Mammary epithelial cell (primary cell): ENCODE measurements at regions of chr18 and their contacts with region 1.

Region 1: DNA sequence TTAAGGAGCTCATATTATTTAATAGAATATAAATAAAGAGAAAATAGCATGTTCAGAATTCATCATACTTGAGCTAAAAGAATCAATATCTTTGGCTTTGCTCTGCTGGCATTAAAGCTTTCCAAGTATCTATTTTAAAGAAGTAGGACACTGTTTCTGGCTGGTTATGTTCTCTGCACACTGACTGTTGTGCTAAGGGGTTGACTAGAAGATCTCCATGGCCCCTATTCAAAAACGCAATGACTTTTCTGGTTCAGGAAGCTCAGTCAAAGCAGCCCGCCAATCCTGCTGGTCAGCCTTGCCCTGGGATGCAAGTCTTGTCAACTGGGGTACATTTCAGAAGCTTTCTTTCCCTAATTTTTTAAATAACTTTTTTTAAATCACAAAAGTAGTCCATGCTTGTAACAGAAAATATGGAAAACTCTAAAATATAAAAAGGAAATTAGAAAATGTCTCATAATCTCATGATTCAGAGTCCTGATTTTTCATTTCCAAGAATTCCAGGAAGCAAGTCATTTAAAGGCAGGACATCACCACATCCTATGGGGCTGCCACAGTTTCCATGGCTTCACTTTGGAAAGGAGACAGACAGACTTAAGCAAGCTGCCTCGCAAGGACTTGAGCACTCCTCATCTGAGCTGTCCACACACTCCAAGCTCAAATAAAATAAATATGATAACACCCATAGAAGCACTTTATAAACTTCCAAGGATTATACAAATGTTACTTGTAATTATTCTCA is 195.1 kb downstream of the TXNL1 start:
- DNase-seq: no peak
- H3K4me3 ChIP-seq: no peak overlapping the region
- H3K27ac ChIP-seq: no peak overlapping the region
- H3K4me1 ChIP-seq: no peaks in the 10 kb centered on the region
- H3K27me3 ChIP-seq: peaks cover 3% of the 10 kb centered on the region
- CTCF ChIP-seq: no peak

Region 2: DNA sequence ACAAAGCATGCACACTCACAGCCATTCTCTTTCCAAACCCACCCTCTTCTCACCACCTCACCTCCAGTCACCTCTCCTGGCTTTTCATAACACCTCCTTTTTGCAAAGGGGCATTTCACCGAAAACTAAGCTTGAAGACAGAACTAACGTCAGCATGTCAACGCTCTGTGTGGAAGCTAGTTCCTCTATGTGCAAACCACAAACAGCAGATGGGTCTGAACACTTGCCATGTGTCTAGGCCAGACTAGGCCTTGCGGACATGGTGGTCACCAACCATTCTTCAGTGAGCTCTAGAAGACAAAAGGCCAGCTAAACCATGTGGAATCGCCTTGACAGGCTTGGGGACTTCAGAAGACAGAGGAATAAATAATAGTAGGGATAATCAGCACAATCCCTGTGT is 46.6 kb after region 1 on chr18:
- CTCF ChIA-PET with region 1: no interaction called
- dilution Hi-C with region 1: loop called (anchors 10 kb)
- in situ Hi-C with region 1: no loop called
- intact Hi-C with region 1: no loop called
- DNase-seq: no peak
- H3K4me3 ChIP-seq: no peak overlapping the region
- H3K27ac ChIP-seq: no peak overlapping the region
- H3K4me1 ChIP-seq: no peaks in the 10 kb centered on the region
- H3K27me3 ChIP-seq: no peaks in the 10 kb centered on the region
- CTCF ChIP-seq: no peak

Region 3: GRCh38 chr18:56511996-56512395 is 68.7 kb after region 1 on chr18:
- CTCF ChIA-PET with region 1: no interaction called
- dilution Hi-C with region 1: loop called (anchors 5 kb)
- in situ Hi-C with region 1: no loop called
- intact Hi-C with region 1: no loop called
- DNase-seq: peak; percentile 11
- H3K4me3 ChIP-seq: no peak overlapping the region
- H3K27ac ChIP-seq: no peak overlapping the region
- H3K4me1 ChIP-seq: no peaks in the 10 kb centered on the region
- H3K27me3 ChIP-seq: no peaks in the 10 kb centered on the region
- CTCF ChIP-seq: no peak